ENCODE measurements at regions of chr5 and their contacts with region 1.

Region 1: DNA sequence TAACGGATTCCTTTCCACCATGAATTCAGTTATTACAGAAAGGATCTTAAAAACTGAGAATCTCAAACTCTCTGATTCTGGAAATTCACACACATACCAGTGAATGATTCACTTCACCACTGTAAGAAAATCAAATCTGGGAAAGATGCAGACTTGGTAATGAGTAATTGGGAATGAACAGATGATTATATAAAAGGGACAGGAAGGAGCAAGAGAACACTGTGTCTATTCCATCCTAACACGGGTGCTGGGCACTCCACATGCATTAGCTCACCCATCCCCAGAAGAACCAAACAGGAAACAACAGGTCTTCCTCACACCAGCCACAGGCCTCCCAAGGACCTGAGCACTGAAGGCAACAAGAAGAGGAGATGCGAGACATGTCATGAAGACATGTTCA is 74.8 kb upstream of the ZNF622 start:
- DNase-seq: no peak
- ATAC-seq: peak in 1 of 4 donors; percentile 16
- H3K4me3 ChIP-seq: no peak overlapping the region
- H3K27ac ChIP-seq: peak overlapping the region in 2 of 4 donors; percentile 73
- H3K4me1 ChIP-seq: peaks cover 0 to 15% (median 0%) of the 10 kb centered on the region in 3 donors
- H3K27me3 ChIP-seq: no peaks in the 10 kb centered on the region
- CTCF ChIP-seq: no peak

Region 2: GRCh38 chr5:15977851-15978250 is 562.6 kb before region 1 on chr5:
- intact Hi-C with region 1: no loop called
- DNase-seq: no peak
- ATAC-seq: no peak
- H3K4me3 ChIP-seq: no peak overlapping the region
- H3K27ac ChIP-seq: no peak overlapping the region
- H3K4me1 ChIP-seq: no peaks in the 10 kb centered on the region
- H3K27me3 ChIP-seq: no peaks in the 10 kb centered on the region
- CTCF ChIP-seq: no peak

Region 3: DNA sequence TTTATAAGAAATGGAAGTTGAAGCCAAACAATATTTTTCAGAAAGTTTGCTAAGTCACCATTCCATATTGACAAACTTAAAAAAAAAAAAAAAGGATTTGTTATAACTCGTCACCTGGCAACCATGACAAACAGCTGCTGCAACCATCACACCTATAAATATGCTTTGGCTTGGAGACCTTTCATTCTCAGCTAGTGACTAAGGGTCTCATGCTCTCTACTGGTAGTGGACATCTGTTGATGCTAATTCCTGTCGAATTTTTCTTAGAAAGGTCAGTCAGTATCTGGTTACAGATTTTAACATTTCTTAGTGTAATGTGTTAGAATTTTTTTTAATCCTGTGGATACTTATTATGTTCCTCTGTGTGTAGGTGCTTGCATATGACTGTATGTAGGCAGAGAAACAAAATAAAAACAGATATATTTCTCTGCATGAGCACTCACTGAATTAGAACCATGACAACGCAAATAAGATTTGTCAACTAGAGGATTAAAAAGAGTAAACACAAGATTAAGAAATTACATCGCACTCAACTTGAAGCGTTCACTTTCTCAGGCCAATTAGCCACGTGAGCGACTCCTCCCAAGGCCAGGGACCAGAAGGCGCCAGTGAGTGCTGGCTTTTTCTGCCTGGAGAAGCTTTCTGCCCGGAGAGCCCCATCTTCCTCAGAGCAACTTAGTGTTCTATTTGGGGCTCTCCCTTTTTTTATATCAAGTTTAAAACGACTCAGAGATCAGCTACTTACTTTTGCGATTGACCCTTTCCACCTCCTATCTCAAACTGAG is 47.8 kb before region 1 on chr5:
- intact Hi-C with region 1: loop called in 2 of 3 experiments (anchors 5 to 10 kb)
- DNase-seq: peak in 4 of 6 donors; percentile 57 to 80 (median 68)
- ATAC-seq: peak; percentile 76 to 81 (median 78)
- H3K4me3 ChIP-seq: no peak overlapping the region
- H3K27ac ChIP-seq: peak overlapping the region; percentile 53 to 84 (median 70)
- H3K4me1 ChIP-seq: peaks cover 19 to 39% (median 23%) of the 10 kb centered on the region in 3 donors
- H3K27me3 ChIP-seq: no peaks in the 10 kb centered on the region
- CTCF ChIP-seq: no peak

Measured in pancreas (tissue), 10 donors.